H1 (cell line): ENCODE measurements at regions of chr6 and their contacts with region 1.

Region 1: GRCh38 chr6:133973109-133973971 is 20.3 kb downstream of the TBPL1 start:
- DNase-seq: no peak
- H3K4me3 ChIP-seq: no peak overlapping the region
- H3K27ac ChIP-seq: no peak overlapping the region
- H3K4me1 ChIP-seq: peaks cover 0 to 7% (median 0%) of the 10 kb centered on the region in 4 experiments; a peak in 3 of 7 replicates
- H3K27me3 ChIP-seq: no peaks in the 10 kb centered on the region
- CTCF ChIP-seq: peak in 2 of 3 experiments; percentile 38 to 53; a peak in 2 of 4 replicates
- EP300 ChIP-seq: no peak
- POLR2A ChIP-seq: no peak
- RAD21 ChIP-seq: peak; percentile 71 to 75

Region 2: DNA sequence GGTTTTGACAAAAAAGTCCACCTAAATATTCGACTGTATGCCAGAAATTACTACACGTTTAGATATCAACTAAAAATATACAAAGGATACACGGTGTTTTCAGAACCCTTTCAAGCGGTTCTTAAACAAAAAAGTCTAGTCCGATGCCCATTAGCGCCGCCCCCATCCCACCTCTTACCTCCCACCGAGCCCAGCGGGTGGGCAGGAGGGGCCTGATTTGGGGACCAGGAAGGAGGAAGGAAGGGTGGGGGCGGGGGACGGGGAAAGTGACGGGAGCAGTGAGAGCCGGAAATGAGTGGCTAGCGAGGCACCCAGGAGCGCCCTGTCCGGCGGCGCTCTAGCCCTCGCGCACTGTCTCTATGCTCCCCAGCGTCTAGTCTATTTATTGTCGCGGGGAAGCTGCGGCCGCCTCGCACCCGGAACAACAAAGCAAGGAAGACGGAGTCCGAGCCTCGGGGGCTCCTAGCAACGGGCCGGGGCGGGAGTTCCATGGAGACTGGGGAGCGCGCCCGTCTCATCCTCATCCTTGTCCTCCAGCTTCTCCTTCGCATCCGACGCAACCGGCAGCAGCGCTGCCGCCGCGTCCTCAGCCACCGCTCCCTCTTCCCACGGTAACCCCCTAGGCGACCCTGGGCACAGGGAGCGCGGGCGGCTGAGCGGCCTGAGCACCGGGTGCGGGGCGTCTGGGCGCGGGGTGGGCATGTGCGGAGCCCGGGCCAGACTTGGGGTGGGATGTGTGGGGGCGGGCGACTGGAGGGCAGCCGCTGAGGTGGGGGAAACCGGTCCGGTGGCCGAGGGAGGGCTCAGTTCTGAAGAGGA is 20.3 kb before region 1 on chr6 and contains the start of gene TBPL1:
- CTCF ChIA-PET with region 1: interaction called, 26 read pairs
- POLR2A ChIA-PET with region 1: interaction called, 3 read pairs
- DNase-seq: peak; percentile 86 to 93
- H3K4me3 ChIP-seq: peak within 1 kb of the TSS; percentile 81 to 92 (median 88)
- H3K27ac ChIP-seq: peak within 1 kb of the TSS; percentile 74; the same call in 1 of the 2 replicates
- H3K4me1 ChIP-seq: peaks cover 0 to 10% (median 3%) of the 10 kb centered on the region in 4 experiments; a peak in 6 of 7 replicates
- H3K27me3 ChIP-seq: no peaks in the 10 kb centered on the region; a peak in 1 of 7 replicates
- CTCF ChIP-seq: no peak
- EP300 ChIP-seq: peak in 1 of 2 experiments; percentile 52; a peak in 1 of 3 replicates
- POLR2A ChIP-seq: peak; percentile 57 to 93
- RAD21 ChIP-seq: no peak
- total RNA-seq, gene TBPL1: 66.3 and 67.0 TPM in 2 replicates

Region 3: GRCh38 chr6:134002821-134003220 is 29.5 kb after region 1 on chr6:
- CTCF ChIA-PET with region 1: interaction called, 45 read pairs
- POLR2A ChIA-PET with region 1: no interaction called
- DNase-seq: no peak
- H3K4me3 ChIP-seq: no peak overlapping the region
- H3K27ac ChIP-seq: no peak overlapping the region
- H3K4me1 ChIP-seq: peaks cover 0 to 3% (median 1%) of the 10 kb centered on the region in 4 experiments; a peak in 2 of 7 replicates
- H3K27me3 ChIP-seq: no peaks in the 10 kb centered on the region
- CTCF ChIP-seq: no peak
- EP300 ChIP-seq: no peak
- POLR2A ChIP-seq: no peak
- RAD21 ChIP-seq: no peak

Region 4: GRCh38 chr6:134074151-134075055 is 101.1 kb after region 1 on chr6:
- CTCF ChIA-PET with region 1: interaction called, 27 read pairs
- POLR2A ChIA-PET with region 1: no interaction called
- DNase-seq: peak; percentile 72 to 78
- H3K4me3 ChIP-seq: peak overlapping the region in 3 of 4 experiments; percentile 14 to 42 (median 34); a peak in 5 of 8 replicates
- H3K27ac ChIP-seq: peak overlapping the region; percentile 69
- H3K4me1 ChIP-seq: peaks cover 4 to 13% (median 10%) of the 10 kb centered on the region in 4 experiments; a peak in 6 of 7 replicates
- H3K27me3 ChIP-seq: no peaks in the 10 kb centered on the region
- CTCF ChIP-seq: peak in 1 of 3 experiments; percentile 8; a peak in 1 of 4 replicates
- EP300 ChIP-seq: peak in 1 of 2 experiments; percentile 18; a peak in 1 of 3 replicates
- POLR2A ChIP-seq: peak in 1 of 2 experiments; percentile 89; a peak in 2 of 3 replicates
- RAD21 ChIP-seq: no peak

Region 5: GRCh38 chr6:134090591-134090990 is 117.3 kb after region 1 on chr6:
- CTCF ChIA-PET with region 1: interaction called, 62 read pairs
- POLR2A ChIA-PET with region 1: no interaction called
- DNase-seq: no peak
- H3K4me3 ChIP-seq: no peak overlapping the region
- H3K27ac ChIP-seq: no peak overlapping the region
- H3K4me1 ChIP-seq: no peaks in the 10 kb centered on the region
- H3K27me3 ChIP-seq: peaks cover 0 to 1% (median 0%) of the 10 kb centered on the region in 4 experiments; a peak in 1 of 7 replicates
- CTCF ChIP-seq: no peak
- EP300 ChIP-seq: no peak
- POLR2A ChIP-seq: no peak
- RAD21 ChIP-seq: no peak

Region 6: DNA sequence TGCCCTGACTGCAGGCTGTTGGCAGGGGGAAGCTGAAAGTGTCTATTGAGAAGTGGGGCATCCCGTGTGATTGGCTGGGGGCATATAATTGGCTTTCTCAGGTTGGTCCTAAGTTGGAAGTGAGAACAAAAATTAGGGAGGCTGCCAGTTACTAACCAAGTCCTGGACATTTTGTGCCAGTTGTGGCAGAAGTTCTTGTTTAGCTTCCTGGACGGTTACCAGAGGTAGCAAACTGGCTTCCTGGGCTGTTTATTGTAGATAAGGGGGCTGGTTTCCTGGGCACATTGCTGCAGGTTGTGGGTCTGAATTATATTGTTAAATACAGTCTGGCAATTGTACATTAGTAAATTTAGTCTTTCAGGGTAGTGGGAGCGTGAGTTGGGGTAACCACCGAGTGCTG is 129.7 kb after region 1 on chr6:
- CTCF ChIA-PET with region 1: interaction called, 62 read pairs
- POLR2A ChIA-PET with region 1: no interaction called
- DNase-seq: no peak
- H3K4me3 ChIP-seq: no peak overlapping the region
- H3K27ac ChIP-seq: no peak overlapping the region
- H3K4me1 ChIP-seq: no peaks in the 10 kb centered on the region
- H3K27me3 ChIP-seq: no peaks in the 10 kb centered on the region
- CTCF ChIP-seq: no peak
- EP300 ChIP-seq: no peak
- POLR2A ChIP-seq: no peak
- RAD21 ChIP-seq: no peak

Region 7: DNA sequence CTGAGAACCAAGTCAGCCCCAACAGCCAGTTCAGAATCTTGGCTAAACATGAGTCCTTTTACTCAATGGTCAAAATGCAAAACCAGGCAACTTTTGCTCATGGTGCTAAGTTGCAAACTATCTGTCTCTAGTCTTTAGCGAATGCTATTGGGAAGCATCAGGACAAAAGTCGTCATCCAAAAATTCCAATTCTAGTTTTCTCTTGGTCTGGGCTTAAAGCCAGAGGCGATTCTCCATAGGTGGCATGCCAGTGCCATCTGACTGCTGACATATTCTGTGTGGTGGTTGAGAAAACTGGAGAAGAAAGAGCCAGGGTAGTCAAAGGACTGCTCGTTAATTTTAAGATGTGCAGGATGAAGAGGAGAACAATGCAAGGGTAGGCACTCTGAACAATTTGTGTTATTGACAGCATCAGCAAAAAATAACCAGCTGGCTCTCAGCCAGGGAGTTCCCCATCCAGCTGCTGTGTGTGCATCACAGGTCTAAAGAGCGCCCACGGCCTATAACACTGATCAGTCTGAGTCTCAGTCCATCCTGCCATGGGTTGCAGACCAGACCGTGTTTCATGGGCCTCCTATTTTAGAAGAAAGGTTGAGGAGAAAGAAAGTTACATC is 663.0 kb after region 1 on chr6:
- CTCF ChIA-PET with region 1: no interaction called
- POLR2A ChIA-PET with region 1: no interaction called
- DNase-seq: no peak
- H3K4me3 ChIP-seq: no peak overlapping the region
- H3K27ac ChIP-seq: no peak overlapping the region
- H3K4me1 ChIP-seq: peaks cover 0 to 6% (median 0%) of the 10 kb centered on the region in 4 experiments; a peak in 3 of 7 replicates
- H3K27me3 ChIP-seq: no peaks in the 10 kb centered on the region
- CTCF ChIP-seq: no peak
- EP300 ChIP-seq: no peak
- POLR2A ChIP-seq: no peak
- RAD21 ChIP-seq: no peak